CD4-positive, alpha-beta memory T cell (primary cell): ENCODE measurements at regions of chr18 and their contacts with region 1.

Region 1: DNA sequence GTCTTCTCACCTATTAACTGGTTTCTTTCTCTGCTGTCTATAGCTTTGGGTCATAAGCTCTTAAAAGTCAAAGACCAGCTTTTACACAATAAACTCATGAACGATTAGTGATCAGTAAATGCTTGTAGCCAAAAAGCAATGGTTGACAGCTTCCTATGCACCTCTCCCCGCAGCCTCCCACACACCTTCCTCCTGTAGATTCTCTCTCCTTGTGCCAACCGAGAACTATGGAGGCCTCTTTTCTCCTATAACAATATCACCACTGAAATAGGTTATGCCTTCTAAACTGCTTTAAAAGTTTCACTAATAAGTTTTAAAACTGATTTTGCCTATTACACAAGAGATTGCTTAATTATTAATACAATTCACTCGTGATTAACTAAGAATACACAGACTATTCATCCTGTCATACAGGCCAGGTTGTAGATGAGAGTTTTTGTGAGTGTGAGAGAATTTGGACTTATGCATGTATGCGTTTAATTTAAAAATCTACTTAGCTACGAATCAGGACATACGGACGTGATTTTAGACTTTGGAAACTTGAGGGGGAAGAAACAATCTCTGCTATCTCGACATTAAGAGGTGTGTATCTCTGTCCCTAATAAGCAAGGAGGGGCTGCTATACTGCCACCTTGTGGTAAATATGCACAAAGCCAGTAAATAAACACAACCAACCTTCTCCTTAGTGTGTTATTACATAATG is 229.1 kb upstream of the RBBP8 start:
- DNase-seq: peak in 4 of 5 donors; percentile 1 to 18 (median 8)
- H3K4me3 ChIP-seq: no peak overlapping the region
- H3K4me3 Mint-ChIP-seq: no peak overlapping the region
- H3K27ac ChIP-seq: no peak overlapping the region
- H3K27ac Mint-ChIP-seq: no peak overlapping the region
- H3K4me1 ChIP-seq: no peaks in the 10 kb centered on the region
- H3K4me1 Mint-ChIP-seq: no peaks in the 10 kb centered on the region
- H3K27me3 ChIP-seq: no peaks in the 10 kb centered on the region
- H3K27me3 Mint-ChIP-seq: peaks cover 2 to 5% of the 10 kb centered on the region in 2 donors

Region 2: GRCh38 chr18:21897811-21898210 is 806.2 kb before region 1 on chr18:
- CTCF ChIA-PET with region 1: no interaction called
- POLR2A ChIA-PET with region 1: no interaction called
- intact Hi-C with region 1: loop called (anchors 5 kb)
- DNase-seq: peak in 3 of 5 donors; percentile 5 to 10 (median 7)
- H3K4me3 ChIP-seq: no peak overlapping the region
- H3K4me3 Mint-ChIP-seq: no peak overlapping the region
- H3K27ac ChIP-seq: no peak overlapping the region
- H3K27ac Mint-ChIP-seq: no peak overlapping the region
- H3K4me1 ChIP-seq: no peaks in the 10 kb centered on the region
- H3K4me1 Mint-ChIP-seq: peaks cover 0 to 7% (median 1%) of the 10 kb centered on the region in 4 donors
- H3K27me3 ChIP-seq: no peaks in the 10 kb centered on the region
- H3K27me3 Mint-ChIP-seq: peaks cover 6 to 10% of the 10 kb centered on the region in 2 donors

Region 3: DNA sequence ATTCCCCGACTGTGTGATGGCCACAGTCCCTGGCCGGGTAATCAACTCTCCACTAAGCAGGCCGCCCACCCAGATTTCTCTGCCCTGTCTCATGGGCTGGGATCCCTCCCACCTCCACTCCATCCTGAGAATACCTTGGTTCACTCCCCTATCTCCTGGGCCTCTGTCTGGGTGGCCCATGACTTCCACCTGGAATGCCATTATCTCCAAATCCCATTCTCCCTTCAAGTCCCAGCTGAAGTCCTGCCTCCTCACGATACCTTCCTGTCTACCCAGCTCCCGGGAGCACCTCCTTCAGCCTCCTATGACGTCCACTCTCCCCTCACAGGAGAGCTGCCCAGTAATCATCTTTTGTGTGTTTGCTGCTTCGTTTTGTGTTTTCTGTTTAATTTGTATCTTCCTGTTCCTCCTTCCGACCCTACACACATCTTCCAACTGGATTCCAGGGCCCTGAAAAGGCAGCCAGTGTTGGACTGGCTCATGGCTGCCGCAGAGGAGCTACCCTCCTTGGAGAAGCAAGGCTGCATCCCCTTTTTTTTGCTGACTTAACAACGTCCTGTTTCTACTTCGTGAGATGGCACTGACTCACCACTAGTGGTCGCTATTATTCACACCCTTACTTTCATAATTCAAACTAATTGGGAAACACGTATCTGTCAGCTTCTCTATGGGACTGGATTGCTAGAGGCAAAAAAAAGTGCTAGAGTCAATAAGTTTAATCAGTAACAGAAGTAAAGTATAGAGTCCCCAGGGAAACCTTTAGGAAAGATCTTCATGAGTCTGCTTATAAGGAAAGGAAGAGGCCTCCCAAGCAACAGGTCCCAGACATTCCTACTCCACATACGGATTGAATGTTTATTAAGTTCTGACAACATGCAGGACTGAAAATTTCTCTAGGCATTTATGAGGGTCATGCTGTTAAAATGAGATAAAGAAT is 706.6 kb before region 1 on chr18:
- CTCF ChIA-PET with region 1: no interaction called
- POLR2A ChIA-PET with region 1: no interaction called
- intact Hi-C with region 1: loop called (anchors 5 kb)
- DNase-seq: peak in 4 of 5 donors; percentile 11 to 26 (median 16)
- H3K4me3 ChIP-seq: no peak overlapping the region
- H3K4me3 Mint-ChIP-seq: no peak overlapping the region
- H3K27ac ChIP-seq: no peak overlapping the region
- H3K27ac Mint-ChIP-seq: no peak overlapping the region
- H3K4me1 ChIP-seq: no peaks in the 10 kb centered on the region
- H3K4me1 Mint-ChIP-seq: peaks cover 4 to 10% (median 4%) of the 10 kb centered on the region in 4 donors
- H3K27me3 ChIP-seq: no peaks in the 10 kb centered on the region
- H3K27me3 Mint-ChIP-seq: peaks cover 2 to 3% of the 10 kb centered on the region in 2 donors

Region 4: GRCh38 chr18:22517356-22517755 is 186.7 kb before region 1 on chr18:
- CTCF ChIA-PET with region 1: no interaction called
- POLR2A ChIA-PET with region 1: no interaction called
- intact Hi-C with region 1: no loop called
- DNase-seq: no peak
- H3K4me3 ChIP-seq: no peak overlapping the region
- H3K4me3 Mint-ChIP-seq: no peak overlapping the region
- H3K27ac ChIP-seq: no peak overlapping the region
- H3K27ac Mint-ChIP-seq: no peak overlapping the region
- H3K4me1 ChIP-seq: no peaks in the 10 kb centered on the region
- H3K4me1 Mint-ChIP-seq: no peaks in the 10 kb centered on the region
- H3K27me3 ChIP-seq: no peaks in the 10 kb centered on the region
- H3K27me3 Mint-ChIP-seq: peaks cover 0 to 8% of the 10 kb centered on the region in 2 donors

Region 5: GRCh38 chr18:22742409-22742808 is 38.4 kb after region 1 on chr18:
- CTCF ChIA-PET with region 1: no interaction called
- POLR2A ChIA-PET with region 1: no interaction called
- intact Hi-C with region 1: no loop called
- DNase-seq: no peak
- H3K4me3 ChIP-seq: no peak overlapping the region
- H3K4me3 Mint-ChIP-seq: no peak overlapping the region
- H3K27ac ChIP-seq: no peak overlapping the region
- H3K27ac Mint-ChIP-seq: peak overlapping the region in 1 of 7 donors; percentile 32
- H3K4me1 ChIP-seq: no peaks in the 10 kb centered on the region
- H3K4me1 Mint-ChIP-seq: peaks cover 0 to 2% (median 0%) of the 10 kb centered on the region in 4 donors
- H3K27me3 ChIP-seq: no peaks in the 10 kb centered on the region
- H3K27me3 Mint-ChIP-seq: peaks cover under 1 to 6% of the 10 kb centered on the region in 2 donors

Region 6: DNA sequence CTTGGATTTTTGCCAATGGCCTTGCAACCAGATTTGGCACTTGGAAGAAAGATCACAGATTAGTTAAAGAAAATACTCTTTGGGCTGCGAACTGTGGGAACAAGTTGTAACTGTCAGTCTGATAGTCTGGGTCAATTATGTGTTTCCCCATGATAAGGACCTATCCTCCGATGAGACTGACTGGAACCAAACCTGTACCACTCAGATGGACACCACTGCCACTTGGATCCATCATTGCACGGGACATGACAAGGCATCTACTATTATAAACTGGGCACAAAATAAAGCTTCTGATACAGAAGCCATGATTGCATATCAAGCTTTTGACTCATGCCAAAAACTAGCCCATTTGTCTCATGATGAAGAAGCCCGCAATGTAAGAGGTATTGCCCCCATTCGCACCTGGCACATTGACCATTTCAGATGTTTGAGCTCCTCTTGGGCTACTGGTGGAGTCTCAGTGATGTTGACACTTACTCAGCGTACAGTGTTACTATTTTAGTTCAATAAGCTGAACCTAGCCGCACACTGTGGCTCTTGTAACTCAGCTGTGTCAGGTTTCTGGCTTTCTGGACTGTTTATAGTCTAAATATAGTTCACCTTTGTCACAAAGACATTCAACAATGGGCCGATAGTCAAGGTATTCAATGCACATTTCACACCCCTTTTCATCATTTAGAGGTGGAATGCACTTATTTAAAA is 49.2 kb after region 1 on chr18:
- CTCF ChIA-PET with region 1: no interaction called
- POLR2A ChIA-PET with region 1: no interaction called
- intact Hi-C with region 1: loop called (anchors 10 kb)
- DNase-seq: no peak
- H3K4me3 ChIP-seq: no peak overlapping the region
- H3K4me3 Mint-ChIP-seq: no peak overlapping the region
- H3K27ac ChIP-seq: no peak overlapping the region
- H3K27ac Mint-ChIP-seq: no peak overlapping the region
- H3K4me1 ChIP-seq: no peaks in the 10 kb centered on the region
- H3K4me1 Mint-ChIP-seq: no peaks in the 10 kb centered on the region
- H3K27me3 ChIP-seq: no peaks in the 10 kb centered on the region
- H3K27me3 Mint-ChIP-seq: peaks cover 7 to 17% of the 10 kb centered on the region in 2 donors

Region 7: GRCh38 chr18:23207191-23207955 is 503.3 kb after region 1 on chr18:
- CTCF ChIA-PET with region 1: no interaction called
- POLR2A ChIA-PET with region 1: no interaction called
- intact Hi-C with region 1: no loop called
- DNase-seq: no peak
- H3K4me3 ChIP-seq: no peak overlapping the region
- H3K4me3 Mint-ChIP-seq: no peak overlapping the region
- H3K27ac ChIP-seq: no peak overlapping the region
- H3K27ac Mint-ChIP-seq: no peak overlapping the region
- H3K4me1 ChIP-seq: no peaks in the 10 kb centered on the region
- H3K4me1 Mint-ChIP-seq: peaks cover 0 to 5% (median 3%) of the 10 kb centered on the region in 4 donors
- H3K27me3 ChIP-seq: no peaks in the 10 kb centered on the region
- H3K27me3 Mint-ChIP-seq: peaks cover 3 to 15% of the 10 kb centered on the region in 2 donors